CD8-positive, alpha-beta memory T cell (primary cell): ENCODE measurements at regions of chr15 and their contacts with region 1.

Region 1: GRCh38 chr15:63945007-63945788 is 101.1 kb downstream of the DAPK2 start:
- DNase-seq: peak; percentile 44 to 74 (median 53)
- H3K4me3 ChIP-seq: no peak overlapping the region
- H3K4me3 Mint-ChIP-seq: peak overlapping the region in 1 of 7 donors; percentile 12
- H3K27ac ChIP-seq: no peak overlapping the region
- H3K27ac Mint-ChIP-seq: peak overlapping the region in 7 of 8 donors; percentile 46 to 90 (median 72)
- H3K4me1 ChIP-seq: peaks cover 4% of the 10 kb centered on the region
- H3K4me1 Mint-ChIP-seq: peaks cover 19 to 33% (median 27%) of the 10 kb centered on the region in 3 donors
- H3K27me3 ChIP-seq: no peaks in the 10 kb centered on the region
- H3K27me3 Mint-ChIP-seq: no peaks in the 10 kb centered on the region

Region 2: GRCh38 chr15:64052925-64053491 is 107.8 kb after region 1 on chr15:
- CTCF ChIA-PET with region 1: interaction called, 72 read pairs
- POLR2A ChIA-PET with region 1: no interaction called
- DNase-seq: no peak
- H3K4me3 ChIP-seq: no peak overlapping the region
- H3K4me3 Mint-ChIP-seq: no peak overlapping the region
- H3K27ac ChIP-seq: no peak overlapping the region
- H3K27ac Mint-ChIP-seq: no peak overlapping the region
- H3K4me1 ChIP-seq: no peaks in the 10 kb centered on the region
- H3K4me1 Mint-ChIP-seq: no peaks in the 10 kb centered on the region
- H3K27me3 ChIP-seq: no peaks in the 10 kb centered on the region
- H3K27me3 Mint-ChIP-seq: peaks cover 5 to 12% of the 10 kb centered on the region in 2 donors

Region 3: DNA sequence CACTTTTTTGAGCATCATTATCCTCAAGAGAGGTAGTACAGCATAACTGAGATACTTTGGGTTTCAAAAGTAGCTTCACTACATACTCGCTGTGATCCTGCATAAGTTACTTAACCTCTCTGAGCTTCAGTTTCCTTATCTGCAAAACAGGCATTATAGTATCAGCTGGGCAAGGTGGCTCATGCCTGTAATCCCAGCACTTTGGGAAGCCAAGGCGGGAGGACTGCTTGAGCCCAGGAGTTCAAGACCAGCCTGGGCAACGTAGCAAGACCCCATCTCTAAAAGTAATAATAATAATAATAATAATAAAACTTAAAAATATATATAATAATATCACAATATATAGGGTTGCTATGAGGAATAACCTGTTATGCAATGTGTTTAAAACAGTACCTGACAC is 137.6 kb after region 1 on chr15:
- CTCF ChIA-PET with region 1: no interaction called
- POLR2A ChIA-PET with region 1: no interaction called
- DNase-seq: no peak
- H3K4me3 ChIP-seq: no peak overlapping the region
- H3K4me3 Mint-ChIP-seq: no peak overlapping the region
- H3K27ac ChIP-seq: no peak overlapping the region
- H3K27ac Mint-ChIP-seq: no peak overlapping the region
- H3K4me1 ChIP-seq: no peaks in the 10 kb centered on the region
- H3K4me1 Mint-ChIP-seq: peaks cover 0 to 3% (median 1%) of the 10 kb centered on the region in 3 donors
- H3K27me3 ChIP-seq: no peaks in the 10 kb centered on the region
- H3K27me3 Mint-ChIP-seq: no peaks in the 10 kb centered on the region

Region 4: GRCh38 chr15:64586259-64586870 is 641.2 kb after region 1 on chr15:
- CTCF ChIA-PET with region 1: no interaction called
- POLR2A ChIA-PET with region 1: no interaction called
- DNase-seq: no peak
- H3K4me3 ChIP-seq: no peak overlapping the region
- H3K4me3 Mint-ChIP-seq: no peak overlapping the region
- H3K27ac ChIP-seq: no peak overlapping the region
- H3K27ac Mint-ChIP-seq: peak overlapping the region in 3 of 8 donors; percentile 52 to 77 (median 76)
- H3K4me1 ChIP-seq: peaks cover 58% of the 10 kb centered on the region
- H3K4me1 Mint-ChIP-seq: peaks cover 50 to 67% (median 61%) of the 10 kb centered on the region in 3 donors
- H3K27me3 ChIP-seq: no peaks in the 10 kb centered on the region
- H3K27me3 Mint-ChIP-seq: no peaks in the 10 kb centered on the region